Prostate gland (tissue), 2 donors: ENCODE measurements at regions of chr10 and their contacts with region 1.

Region 1: GRCh38 chr10:133516057-133516456 is 11.1 kb upstream of the CYP2E1 start:
- DNase-seq: no peak
- H3K4me3 ChIP-seq: no peak overlapping the region
- H3K27ac ChIP-seq: no peak overlapping the region
- H3K4me1 ChIP-seq: no peaks in the 10 kb centered on the region
- H3K27me3 ChIP-seq: no peaks in the 10 kb centered on the region
- CTCF ChIP-seq: no peak
- POLR2A ChIP-seq: no peak

Region 2: GRCh38 chr10:133329491-133330202 is 186.4 kb before region 1 on chr10:
- intact Hi-C with region 1: loop called (anchors 5 kb)
- DNase-seq: peak; percentile 76
- H3K4me3 ChIP-seq: no peak overlapping the region
- H3K27ac ChIP-seq: no peak overlapping the region
- H3K4me1 ChIP-seq: no peaks in the 10 kb centered on the region
- H3K27me3 ChIP-seq: peaks cover 2% of the 10 kb centered on the region
- CTCF ChIP-seq: peak; percentile 85 to 90 (median 87)
- POLR2A ChIP-seq: no peak

Region 3: GRCh38 chr10:133378251-133379096 is 137.6 kb before region 1 on chr10:
- intact Hi-C with region 1: no loop called
- DNase-seq: peak; percentile 44
- H3K4me3 ChIP-seq: peak overlapping the region; percentile 75 to 85
- H3K27ac ChIP-seq: peak overlapping the region; percentile 80
- H3K4me1 ChIP-seq: peaks cover 4% of the 10 kb centered on the region
- H3K27me3 ChIP-seq: no peaks in the 10 kb centered on the region
- CTCF ChIP-seq: no peak
- POLR2A ChIP-seq: peak; percentile 33

Region 4: GRCh38 chr10:133608855-133609254 is 92.8 kb after region 1 on chr10:
- intact Hi-C with region 1: no loop called
- DNase-seq: no peak
- H3K4me3 ChIP-seq: no peak overlapping the region
- H3K27ac ChIP-seq: no peak overlapping the region
- H3K4me1 ChIP-seq: no peaks in the 10 kb centered on the region
- H3K27me3 ChIP-seq: no peaks in the 10 kb centered on the region
- CTCF ChIP-seq: peak in 3 of 4 experiments; percentile 30 to 39 (median 32)
- POLR2A ChIP-seq: no peak